ENCODE measurements at regions of chr2 and their contacts with region 1.

Region 1: DNA sequence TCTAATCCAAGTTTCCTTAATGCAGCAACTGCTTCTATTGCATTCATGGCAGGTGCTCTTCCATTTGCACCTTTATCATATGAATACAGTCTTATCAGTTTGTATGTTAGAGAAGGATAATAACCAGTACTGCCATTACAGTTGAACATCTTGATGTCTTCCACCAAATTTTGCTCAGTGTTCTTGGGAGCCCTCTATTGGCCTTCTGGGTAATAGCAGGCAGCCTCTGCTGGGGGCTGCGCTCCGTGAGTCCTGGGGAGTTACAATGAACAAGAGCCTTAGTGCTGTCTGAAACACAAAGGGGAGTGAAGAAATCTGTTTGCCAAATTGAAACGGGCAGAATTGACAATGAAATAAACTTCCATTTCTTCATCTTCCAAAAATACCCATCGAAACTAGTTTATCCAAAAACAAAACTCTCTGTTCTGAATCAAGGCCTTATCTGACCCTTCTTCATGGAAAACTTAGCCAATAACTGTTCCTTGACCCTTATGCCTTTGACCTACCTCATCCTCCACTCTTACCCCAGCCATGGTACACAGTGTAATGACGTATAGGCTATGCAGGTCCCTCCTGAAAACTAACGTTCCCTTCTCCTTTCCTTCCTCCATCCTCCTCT is 79.9 kb downstream of the ALK start:
- DNase-seq: no peak
- H3K4me3 ChIP-seq: no peak overlapping the region
- H3K27ac ChIP-seq: no peak overlapping the region
- H3K4me1 ChIP-seq: no peaks in the 10 kb centered on the region
- H3K27me3 ChIP-seq: no peaks in the 10 kb centered on the region
- CTCF ChIP-seq: peak; percentile 54 to 88 (median 79)
- EP300 ChIP-seq: no peak
- POLR2A ChIP-seq: no peak

Region 2: DNA sequence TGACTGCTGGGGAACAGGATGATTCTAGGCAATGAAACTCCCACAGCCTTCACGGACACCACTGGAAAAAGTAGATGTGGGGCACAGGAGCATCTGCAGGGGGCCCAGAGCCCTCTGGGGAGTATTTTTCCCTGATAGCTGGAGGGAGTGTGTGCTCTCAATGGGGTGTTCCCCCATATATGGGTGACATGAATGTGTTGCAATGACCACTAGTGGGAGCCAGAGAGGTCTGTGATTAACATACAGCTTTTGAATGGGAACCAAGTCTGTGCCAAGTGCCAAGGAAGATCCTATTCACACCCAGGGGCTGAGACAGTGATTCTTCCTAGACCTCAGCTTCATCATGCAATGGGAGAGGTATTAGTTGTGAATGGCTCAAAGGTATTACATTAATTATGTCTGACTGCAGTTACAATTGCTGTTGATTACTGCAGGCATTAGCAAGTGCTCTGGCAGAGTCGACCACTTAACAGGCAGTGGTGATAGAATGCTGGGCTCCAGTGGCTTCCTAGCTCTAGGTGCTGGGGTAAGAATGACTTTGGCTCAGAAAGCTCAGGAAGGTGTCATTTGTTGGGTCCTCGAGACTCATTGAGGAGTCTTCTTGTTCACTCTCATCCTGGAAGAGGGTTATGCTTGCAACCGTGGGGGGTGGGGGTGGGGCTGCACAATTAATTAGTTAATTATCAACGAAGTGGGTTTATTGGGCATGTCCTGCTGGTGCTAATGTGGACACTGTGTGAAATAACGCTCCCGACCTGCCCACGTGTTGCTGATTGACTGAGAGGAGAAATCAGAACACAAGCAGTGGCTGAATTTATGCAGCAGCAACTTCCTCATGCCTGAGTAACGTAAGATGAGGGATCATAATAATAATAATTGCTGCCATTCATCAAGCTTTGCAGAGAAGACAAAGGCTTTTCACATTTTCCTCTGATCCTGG is 532.1 kb before region 1 on chr2:
- in situ Hi-C with region 1: loop called in 1 of 4 experiments (anchors 25 kb)
- intact Hi-C with region 1: no loop called
- DNase-seq: peak; percentile 29
- H3K4me3 ChIP-seq: no peak overlapping the region
- H3K27ac ChIP-seq: no peak overlapping the region
- H3K4me1 ChIP-seq: no peaks in the 10 kb centered on the region
- H3K27me3 ChIP-seq: no peaks in the 10 kb centered on the region
- CTCF ChIP-seq: peak; percentile 54 to 74 (median 71)
- EP300 ChIP-seq: no peak
- POLR2A ChIP-seq: no peak

Region 3: GRCh38 chr2:29723255-29724001 is 118.1 kb before region 1 on chr2:
- in situ Hi-C with region 1: no loop called
- intact Hi-C with region 1: no loop called
- DNase-seq: peak; percentile 7
- H3K4me3 ChIP-seq: no peak overlapping the region
- H3K27ac ChIP-seq: no peak overlapping the region
- H3K4me1 ChIP-seq: no peaks in the 10 kb centered on the region
- H3K27me3 ChIP-seq: no peaks in the 10 kb centered on the region
- CTCF ChIP-seq: no peak
- EP300 ChIP-seq: no peak
- POLR2A ChIP-seq: no peak

Measured in transverse colon (tissue), 4 donors.